Panc1 (cell line): ENCODE measurements at regions of chr1 and their contacts with region 1.

Region 1: DNA sequence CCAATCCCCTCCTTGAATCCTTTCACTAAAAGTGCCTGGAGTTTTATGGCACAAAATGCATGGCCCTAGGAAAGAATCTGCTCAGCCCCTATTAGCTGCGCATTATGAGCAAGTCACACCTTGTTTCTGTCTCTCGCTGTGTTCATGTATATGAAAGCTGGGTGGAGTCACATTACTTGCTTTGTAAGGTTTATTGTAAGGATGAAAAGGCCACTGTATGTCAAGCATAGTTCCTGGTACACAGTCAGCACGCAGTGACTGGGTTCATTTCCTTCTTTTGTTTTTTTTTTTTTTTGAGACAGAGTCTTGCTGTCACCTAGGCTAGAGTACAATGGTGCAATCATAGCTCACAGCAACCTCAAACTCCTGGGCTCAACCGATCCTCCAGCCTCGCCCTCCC is 6.7 kb upstream of the SLC9A1 start:
- DNase-seq: no peak
- ATAC-seq: no peak
- H3K4me3 ChIP-seq: no peak overlapping the region
- H3K27ac ChIP-seq: no peak overlapping the region
- H3K4me1 ChIP-seq: peaks cover 4% of the 10 kb centered on the region; the same call in 1 of the 2 replicates
- H3K27me3 ChIP-seq: no peaks in the 10 kb centered on the region
- CTCF ChIP-seq: no peak

Region 2: DNA sequence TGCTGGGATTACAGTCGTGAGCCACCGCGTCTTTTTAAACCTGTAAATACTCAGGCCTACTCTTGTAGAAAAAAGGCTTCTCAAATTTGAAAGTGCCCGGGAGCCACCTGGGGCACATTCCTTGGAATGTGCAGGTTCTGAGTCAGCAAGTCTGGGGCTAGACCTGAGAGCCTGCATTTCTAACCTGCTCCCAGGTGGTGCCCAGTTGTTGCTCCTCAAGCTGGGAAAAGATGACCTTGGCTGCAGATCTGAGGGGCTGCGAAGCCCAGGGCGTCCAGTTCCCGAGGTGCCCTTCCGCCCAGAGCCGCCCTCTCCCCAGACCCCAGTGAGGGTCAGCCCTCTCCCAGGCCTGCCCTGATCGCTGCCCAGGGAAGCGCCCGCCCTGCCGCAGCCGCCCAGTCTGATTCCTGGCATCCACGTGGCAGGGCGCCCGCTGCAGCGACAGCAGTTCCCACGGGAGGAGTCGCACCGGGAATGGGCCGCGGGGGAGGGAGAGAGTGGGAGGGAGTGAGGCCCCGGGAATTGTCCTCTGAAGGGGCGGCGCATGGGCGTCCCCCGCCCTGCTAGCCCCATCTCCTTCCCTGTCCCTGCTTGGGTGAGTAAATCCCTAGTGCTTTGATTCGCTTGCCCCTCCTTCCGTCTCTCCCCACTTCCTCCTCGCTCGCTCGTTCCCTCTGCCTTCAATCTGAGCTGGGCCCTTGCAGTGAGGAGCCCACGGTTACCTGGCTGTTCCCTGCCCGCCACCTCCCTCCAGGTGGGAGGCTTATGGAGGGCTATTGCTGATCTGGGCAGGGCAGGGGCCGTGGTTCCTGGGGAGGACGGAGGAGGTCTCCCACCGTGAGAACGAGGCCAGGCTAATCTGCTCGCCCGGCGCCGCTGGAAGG is 130.1 kb before region 1 on chr1:
- CTCF ChIA-PET with region 1: no interaction called
- POLR2A ChIA-PET with region 1: interaction called, 18 read pairs
- in situ Hi-C with region 1: no loop called
- intact Hi-C with region 1: no loop called
- DNase-seq: no peak
- ATAC-seq: no peak
- H3K4me3 ChIP-seq: no peak overlapping the region
- H3K27ac ChIP-seq: no peak overlapping the region
- H3K4me1 ChIP-seq: no peaks in the 10 kb centered on the region
- H3K27me3 ChIP-seq: no peaks in the 10 kb centered on the region
- CTCF ChIP-seq: no peak

Region 3: GRCh38 chr1:27234049-27234882 is 72.7 kb after region 1 on chr1 and contains the start of gene WDTC1:
- CTCF ChIA-PET with region 1: no interaction called
- POLR2A ChIA-PET with region 1: interaction called, 14 read pairs
- in situ Hi-C with region 1: no loop called
- intact Hi-C with region 1: no loop called
- DNase-seq: peak; percentile 77
- ATAC-seq: peak; percentile 98
- H3K4me3 ChIP-seq: peak within 1 kb of the TSS; percentile 52 to 66
- H3K27ac ChIP-seq: peak within 1 kb of the TSS; percentile 75
- H3K4me1 ChIP-seq: peaks cover 12% of the 10 kb centered on the region
- H3K27me3 ChIP-seq: no peaks in the 10 kb centered on the region
- CTCF ChIP-seq: no peak
- total RNA-seq, gene WDTC1: 24.6 TPM

Region 4: GRCh38 chr1:28965271-28965870 is 1803.8 kb after region 1 on chr1:
- CTCF ChIA-PET with region 1: no interaction called
- POLR2A ChIA-PET with region 1: interaction called, 12 read pairs
- in situ Hi-C with region 1: no loop called
- intact Hi-C with region 1: no loop called
- DNase-seq: no peak
- ATAC-seq: no peak
- H3K4me3 ChIP-seq: no peak overlapping the region
- H3K27ac ChIP-seq: no peak overlapping the region
- H3K4me1 ChIP-seq: peaks cover 4% of the 10 kb centered on the region; the same call in 1 of the 2 replicates
- H3K27me3 ChIP-seq: no peaks in the 10 kb centered on the region; the same call in 1 of the 2 replicates
- CTCF ChIP-seq: no peak